Activated CD8-positive, alpha-beta T cell treated with anti-CD3 and anti-CD28 coated beads for 36 hours (primary cell): ENCODE measurements at regions of chr9 and their contacts with region 1.

Region 1: DNA sequence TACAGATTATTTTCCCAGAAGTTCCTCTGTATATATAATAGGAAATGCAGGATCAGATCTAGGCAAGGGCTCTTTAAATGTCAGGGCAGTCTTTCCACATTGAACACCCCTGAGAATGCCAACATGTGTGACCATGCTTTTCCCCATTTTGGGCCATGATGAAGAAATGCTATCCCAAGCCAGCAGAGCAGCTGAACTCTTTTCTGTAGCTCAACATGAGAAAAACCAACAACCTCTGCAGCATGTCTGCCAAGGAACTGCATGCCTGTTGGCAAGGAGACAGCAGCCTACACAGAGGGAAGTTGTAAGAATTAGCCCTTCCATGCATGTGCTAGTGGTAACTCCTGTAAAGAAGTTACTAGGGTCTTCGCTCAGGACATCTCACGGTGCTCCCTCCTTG is 9.5 kb upstream of the IFNK start:
- DNase-seq: no peak
- ATAC-seq: no peak
- H3K4me3 Mint-ChIP-seq: no peak overlapping the region
- H3K27ac Mint-ChIP-seq: no peak overlapping the region
- H3K4me1 Mint-ChIP-seq: no peaks in the 10 kb centered on the region
- H3K27me3 Mint-ChIP-seq: no peaks in the 10 kb centered on the region
- CTCF ChIP-seq: no peak

Region 2: DNA sequence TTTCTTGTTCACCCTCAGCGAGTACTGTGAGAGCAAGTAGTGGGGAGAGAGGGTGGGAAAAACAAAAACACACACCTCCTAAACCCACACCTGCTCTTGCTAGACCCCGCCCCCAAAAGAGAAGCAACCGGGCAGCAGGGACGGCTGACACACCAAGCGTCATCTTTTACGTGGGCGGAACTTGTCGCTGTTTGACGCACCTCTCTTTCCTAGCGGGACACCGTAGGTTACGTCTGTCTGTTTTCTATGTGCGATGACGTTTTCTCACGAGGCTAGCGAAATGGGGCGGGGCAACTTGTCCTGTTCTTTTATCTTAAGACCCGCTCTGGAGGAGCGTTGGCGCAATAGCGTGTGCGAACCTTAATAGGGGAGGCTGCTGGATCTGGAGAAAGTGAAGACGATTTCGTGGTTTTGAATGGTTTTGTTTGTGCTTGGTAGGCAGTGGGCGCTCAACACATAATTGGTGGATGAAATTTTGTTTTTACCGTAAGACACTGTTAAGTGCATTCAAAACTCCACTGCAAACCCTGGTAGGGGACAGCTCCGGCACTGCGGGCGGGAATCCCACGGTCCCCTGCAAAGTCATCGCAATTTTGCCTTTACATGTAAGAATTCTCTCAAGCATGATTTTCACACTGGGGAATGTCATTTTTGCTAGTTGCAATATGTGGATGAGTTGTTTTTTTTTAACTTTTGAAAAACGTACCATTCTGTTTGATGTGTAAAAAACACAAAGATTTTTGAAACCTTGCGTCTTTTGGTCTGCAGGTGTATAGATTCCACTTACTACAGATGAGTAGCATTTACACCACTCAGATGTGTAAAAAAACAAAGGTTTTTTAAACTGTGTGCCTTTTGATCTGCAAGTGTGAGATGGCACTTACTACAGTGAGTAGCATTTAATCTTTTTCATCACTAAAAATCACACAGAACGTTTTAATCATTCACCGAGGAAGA is 59.4 kb after region 1 on chr9:
- CTCF ChIA-PET with region 1: no interaction called
- POLR2A ChIA-PET with region 1: no interaction called
- intact Hi-C with region 1: loop called (anchors 10 kb)
- DNase-seq: peak; percentile 99
- ATAC-seq: peak; percentile 80
- H3K4me3 Mint-ChIP-seq: peak overlapping the region; percentile 88
- H3K27ac Mint-ChIP-seq: peak overlapping the region; percentile 98
- H3K4me1 Mint-ChIP-seq: peaks cover 25% of the 10 kb centered on the region
- H3K27me3 Mint-ChIP-seq: no peaks in the 10 kb centered on the region
- CTCF ChIP-seq: no peak